ENCODE measurements at regions of chr18 and their contacts with region 1.

Region 1: DNA sequence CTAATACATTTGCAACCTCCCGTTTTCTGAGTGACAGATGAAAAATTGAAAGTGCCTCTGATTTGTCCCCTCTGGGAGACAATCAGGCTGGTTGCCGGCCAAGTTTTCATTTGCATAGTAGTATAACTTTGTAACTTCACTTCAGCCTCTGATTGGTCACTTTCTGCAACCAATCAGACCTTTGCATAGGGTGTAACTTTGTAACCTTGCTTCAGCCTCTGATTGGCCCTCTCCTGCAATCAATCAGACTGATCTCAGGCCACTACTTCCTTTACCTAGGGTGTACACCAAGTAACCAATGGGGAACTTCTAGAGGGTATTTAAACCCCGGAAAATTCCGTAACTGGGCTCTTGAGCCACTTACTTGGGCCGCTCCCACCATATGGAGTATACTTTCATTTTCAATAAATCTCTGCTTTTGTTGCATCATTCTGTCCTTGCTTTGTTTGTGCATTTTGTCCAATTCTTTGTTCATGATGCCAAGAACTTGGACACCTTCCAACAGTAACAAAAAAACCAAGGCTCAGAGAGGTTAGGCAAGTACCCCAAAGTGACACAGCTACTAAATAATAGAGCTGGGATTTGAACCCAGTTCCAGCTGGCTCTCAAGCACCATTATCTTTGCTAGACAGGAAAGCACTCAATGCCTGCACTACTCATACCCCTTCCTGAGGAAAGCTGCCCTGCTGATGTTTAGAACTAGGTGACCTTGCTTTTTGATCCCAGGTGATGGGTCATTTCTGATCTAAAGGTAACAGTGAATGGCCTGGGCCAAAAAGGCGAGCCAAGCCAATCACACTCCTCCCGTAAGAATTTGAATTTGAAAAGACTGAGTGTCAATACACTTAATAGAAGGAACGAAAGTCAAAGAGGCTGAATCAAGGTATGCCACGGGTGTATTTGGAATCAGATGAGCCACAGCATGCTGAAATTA is 10.9 kb upstream of the MYOM1 start:
- DNase-seq: no peak
- H3K4me3 ChIP-seq: no peak overlapping the region
- H3K27ac ChIP-seq: no peak overlapping the region
- H3K4me1 ChIP-seq: no peaks in the 10 kb centered on the region
- H3K27me3 ChIP-seq: no peaks in the 10 kb centered on the region
- CTCF ChIP-seq: no peak
- EP300 ChIP-seq: no peak
- POLR2A ChIP-seq: no peak

Region 2: DNA sequence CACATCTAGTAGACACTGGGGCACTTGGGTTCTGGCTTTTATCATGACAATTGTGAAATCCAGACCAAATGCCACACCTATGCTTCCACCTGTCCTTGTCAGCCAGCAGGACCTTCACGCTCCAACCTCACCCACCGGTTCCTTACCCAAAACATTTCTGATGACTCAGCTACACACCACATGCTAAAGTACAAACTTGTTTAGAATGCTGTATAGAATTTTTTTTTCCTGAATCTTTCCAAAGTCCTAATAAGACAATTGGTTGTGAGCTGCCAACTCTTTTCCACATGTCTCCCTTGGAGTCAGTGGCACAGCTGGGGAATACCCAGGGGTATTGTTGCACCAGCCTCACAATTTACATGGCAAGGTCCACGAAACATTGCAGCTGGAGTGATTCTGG is 142.2 kb before region 1 on chr18:
- intact Hi-C with region 1: loop called in 1 of 4 experiments (anchors 10 kb)
- DNase-seq: no peak
- H3K4me3 ChIP-seq: no peak overlapping the region
- H3K27ac ChIP-seq: no peak overlapping the region
- H3K4me1 ChIP-seq: no peaks in the 10 kb centered on the region
- H3K27me3 ChIP-seq: no peaks in the 10 kb centered on the region
- CTCF ChIP-seq: no peak
- EP300 ChIP-seq: no peak
- POLR2A ChIP-seq: no peak

Region 3: GRCh38 chr18:3177902-3178687 is 52.6 kb before region 1 on chr18:
- intact Hi-C with region 1: no loop called
- DNase-seq: no peak
- H3K4me3 ChIP-seq: no peak overlapping the region
- H3K27ac ChIP-seq: no peak overlapping the region
- H3K4me1 ChIP-seq: peaks cover 2% of the 10 kb centered on the region
- H3K27me3 ChIP-seq: no peaks in the 10 kb centered on the region
- CTCF ChIP-seq: no peak
- EP300 ChIP-seq: no peak
- POLR2A ChIP-seq: no peak

Region 4: DNA sequence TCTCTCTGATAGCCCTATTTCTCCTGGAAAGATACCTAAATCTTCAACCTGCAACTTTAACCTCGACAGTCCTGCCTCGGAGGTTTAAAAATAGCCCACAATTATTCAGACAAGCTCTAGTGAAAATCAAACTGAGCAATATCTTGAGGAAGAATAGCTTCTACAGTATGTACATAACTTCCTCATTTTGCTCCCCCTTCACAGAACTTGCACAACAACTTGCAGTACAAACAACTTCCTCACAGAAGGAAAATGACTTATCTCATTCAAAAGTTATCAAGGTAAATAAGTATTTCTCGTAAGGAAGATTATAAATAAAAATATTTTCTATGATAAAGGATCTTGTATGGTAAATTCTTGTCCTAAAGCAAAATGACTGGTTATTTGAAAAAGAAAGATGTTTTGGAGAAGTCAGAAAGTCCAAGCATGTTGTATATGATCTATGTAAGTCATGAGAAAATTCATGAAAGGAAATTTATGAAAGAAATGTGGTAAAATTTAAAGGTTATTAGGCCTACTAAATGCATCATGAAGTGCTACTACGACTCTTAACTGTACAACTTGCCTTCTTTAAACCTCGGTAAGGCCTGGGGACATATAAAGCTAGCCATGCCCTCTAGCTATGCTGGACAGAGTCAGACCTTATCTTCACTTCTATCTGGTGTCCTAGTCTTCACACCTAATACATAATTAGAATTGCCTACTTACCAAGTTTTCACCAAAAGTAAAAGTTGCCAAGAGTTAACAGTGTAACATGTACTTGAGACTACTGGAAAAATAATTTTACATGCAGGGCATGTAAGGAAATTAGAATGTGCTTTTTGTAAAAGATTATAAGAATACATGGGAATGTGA is 830.0 kb after region 1 on chr18:
- intact Hi-C with region 1: no loop called
- DNase-seq: no peak
- H3K4me3 ChIP-seq: no peak overlapping the region
- H3K27ac ChIP-seq: no peak overlapping the region
- H3K4me1 ChIP-seq: no peaks in the 10 kb centered on the region
- H3K27me3 ChIP-seq: no peaks in the 10 kb centered on the region
- CTCF ChIP-seq: no peak
- EP300 ChIP-seq: no peak
- POLR2A ChIP-seq: no peak